H1 (cell line): ENCODE measurements at regions of chr2 and their contacts with region 1.

Region 1: DNA sequence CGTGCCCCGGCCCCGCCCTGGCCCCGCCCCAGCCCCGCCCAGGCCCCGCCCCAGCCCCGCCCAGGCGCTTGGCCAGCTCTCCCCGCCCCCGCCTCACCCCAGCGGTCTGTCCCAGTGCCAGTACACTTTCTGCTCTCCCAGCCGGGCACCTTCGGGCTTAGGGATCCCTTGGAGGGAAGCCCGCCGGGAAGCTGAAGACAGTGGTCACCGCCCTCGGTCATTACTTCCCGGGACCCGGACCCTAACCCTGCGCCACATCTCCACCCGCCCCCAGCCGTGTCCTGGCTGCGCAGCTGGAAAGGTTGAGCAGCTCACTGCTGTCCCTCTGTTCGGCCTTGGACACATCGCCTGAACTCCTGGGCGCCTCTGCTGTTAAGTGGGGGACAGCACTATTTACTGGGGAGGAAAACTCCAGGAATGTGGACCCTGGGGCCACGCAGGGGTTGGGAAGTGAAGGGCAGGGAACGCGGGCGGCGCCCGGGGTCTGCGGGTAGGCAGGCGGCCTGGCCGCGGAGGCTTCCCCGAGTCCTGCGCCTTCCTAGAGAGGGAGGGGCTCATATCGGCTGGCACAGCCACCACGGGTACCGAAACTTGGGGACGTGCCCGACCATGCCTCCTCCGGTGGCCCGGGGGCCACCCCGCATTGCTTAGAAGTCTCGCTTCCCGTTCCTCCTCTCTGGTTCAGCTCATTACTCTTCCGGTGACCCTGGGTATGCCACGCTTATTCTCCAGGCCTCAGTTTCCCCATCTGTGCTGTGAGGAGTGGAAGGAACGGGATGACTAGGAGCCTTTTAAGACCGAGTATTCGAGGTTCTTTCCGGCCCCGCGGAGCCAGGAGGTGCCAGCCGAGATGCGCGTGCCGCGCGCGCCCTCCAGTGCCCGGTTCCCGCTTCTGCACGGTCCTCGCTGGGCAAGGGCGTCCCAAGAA is 121.0 kb downstream of the GYPC start:
- DNase-seq: peak; percentile 36 to 94
- H3K4me3 ChIP-seq: peak overlapping the region; percentile 41 to 81 (median 72)
- H3K27ac ChIP-seq: no peak overlapping the region
- H3K4me1 ChIP-seq: peaks cover 0 to 4% (median 2%) of the 10 kb centered on the region in 4 experiments; a peak in 3 of 7 replicates
- H3K27me3 ChIP-seq: peaks cover 0 to 3% (median 1%) of the 10 kb centered on the region in 4 experiments; a peak in 3 of 7 replicates
- CTCF ChIP-seq: peak; percentile 88 to 95 (median 93)
- EP300 ChIP-seq: no peak
- POLR2A ChIP-seq: no peak
- RAD21 ChIP-seq: peak; percentile 98

Region 2: GRCh38 chr2:126244937-126245336 is 532.0 kb before region 1 on chr2:
- CTCF ChIA-PET with region 1: interaction called, 45 read pairs
- POLR2A ChIA-PET with region 1: no interaction called
- DNase-seq: peak; percentile 51 to 85
- H3K4me3 ChIP-seq: no peak overlapping the region
- H3K27ac ChIP-seq: no peak overlapping the region
- H3K4me1 ChIP-seq: no peaks in the 10 kb centered on the region
- H3K27me3 ChIP-seq: no peaks in the 10 kb centered on the region
- CTCF ChIP-seq: peak; percentile 42 to 97 (median 91)
- EP300 ChIP-seq: no peak
- POLR2A ChIP-seq: no peak
- RAD21 ChIP-seq: peak; percentile 94 to 96

Region 3: DNA sequence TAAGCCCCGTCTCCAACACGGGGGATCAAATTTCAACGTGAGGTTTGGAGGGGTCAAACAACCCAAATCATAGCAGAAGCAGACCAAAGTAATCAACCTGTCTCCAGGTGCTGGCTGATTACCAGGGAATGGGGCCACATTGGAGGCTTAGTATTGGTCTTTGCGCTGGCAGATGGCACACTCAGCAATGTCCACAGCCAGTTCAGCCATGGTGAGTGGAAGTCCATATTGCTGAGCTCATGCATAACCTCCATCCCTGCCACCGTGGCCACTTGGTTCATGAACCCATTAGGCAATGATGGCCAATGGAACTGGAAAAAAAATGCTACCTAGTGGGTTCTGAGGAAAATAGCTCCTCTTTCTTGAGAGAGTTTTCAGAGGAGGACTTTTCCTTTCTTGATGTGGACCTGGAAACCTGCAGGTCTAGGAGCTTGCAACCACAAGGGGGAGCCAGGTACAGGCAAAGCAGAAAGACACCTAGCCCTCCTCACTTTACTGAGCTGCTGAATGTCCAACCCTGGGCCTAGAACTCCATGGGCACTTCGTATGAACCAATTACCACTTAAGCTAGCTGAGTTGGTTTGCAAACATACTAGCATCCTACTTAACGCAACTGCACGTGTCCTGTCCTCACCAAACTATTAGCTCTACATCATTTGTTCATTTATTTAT is 249.0 kb before region 1 on chr2:
- CTCF ChIA-PET with region 1: interaction called, 53 read pairs
- POLR2A ChIA-PET with region 1: no interaction called
- DNase-seq: peak; percentile 39 to 79
- H3K4me3 ChIP-seq: no peak overlapping the region
- H3K27ac ChIP-seq: no peak overlapping the region
- H3K4me1 ChIP-seq: no peaks in the 10 kb centered on the region
- H3K27me3 ChIP-seq: no peaks in the 10 kb centered on the region
- CTCF ChIP-seq: peak; percentile 74 to 88 (median 85)
- EP300 ChIP-seq: no peak
- POLR2A ChIP-seq: no peak
- RAD21 ChIP-seq: peak; percentile 87 to 88

Region 4: GRCh38 chr2:126634273-126634861 is 142.6 kb before region 1 on chr2:
- CTCF ChIA-PET with region 1: interaction called, 13 read pairs
- POLR2A ChIA-PET with region 1: no interaction called
- DNase-seq: peak in 1 of 2 experiments; percentile 53
- H3K4me3 ChIP-seq: no peak overlapping the region
- H3K27ac ChIP-seq: no peak overlapping the region
- H3K4me1 ChIP-seq: no peaks in the 10 kb centered on the region
- H3K27me3 ChIP-seq: no peaks in the 10 kb centered on the region; a peak in 1 of 7 replicates
- CTCF ChIP-seq: peak; percentile 31 to 60 (median 49)
- EP300 ChIP-seq: no peak
- POLR2A ChIP-seq: no peak
- RAD21 ChIP-seq: peak; percentile 37 to 55; a peak in 3 of 4 replicates

Region 5: DNA sequence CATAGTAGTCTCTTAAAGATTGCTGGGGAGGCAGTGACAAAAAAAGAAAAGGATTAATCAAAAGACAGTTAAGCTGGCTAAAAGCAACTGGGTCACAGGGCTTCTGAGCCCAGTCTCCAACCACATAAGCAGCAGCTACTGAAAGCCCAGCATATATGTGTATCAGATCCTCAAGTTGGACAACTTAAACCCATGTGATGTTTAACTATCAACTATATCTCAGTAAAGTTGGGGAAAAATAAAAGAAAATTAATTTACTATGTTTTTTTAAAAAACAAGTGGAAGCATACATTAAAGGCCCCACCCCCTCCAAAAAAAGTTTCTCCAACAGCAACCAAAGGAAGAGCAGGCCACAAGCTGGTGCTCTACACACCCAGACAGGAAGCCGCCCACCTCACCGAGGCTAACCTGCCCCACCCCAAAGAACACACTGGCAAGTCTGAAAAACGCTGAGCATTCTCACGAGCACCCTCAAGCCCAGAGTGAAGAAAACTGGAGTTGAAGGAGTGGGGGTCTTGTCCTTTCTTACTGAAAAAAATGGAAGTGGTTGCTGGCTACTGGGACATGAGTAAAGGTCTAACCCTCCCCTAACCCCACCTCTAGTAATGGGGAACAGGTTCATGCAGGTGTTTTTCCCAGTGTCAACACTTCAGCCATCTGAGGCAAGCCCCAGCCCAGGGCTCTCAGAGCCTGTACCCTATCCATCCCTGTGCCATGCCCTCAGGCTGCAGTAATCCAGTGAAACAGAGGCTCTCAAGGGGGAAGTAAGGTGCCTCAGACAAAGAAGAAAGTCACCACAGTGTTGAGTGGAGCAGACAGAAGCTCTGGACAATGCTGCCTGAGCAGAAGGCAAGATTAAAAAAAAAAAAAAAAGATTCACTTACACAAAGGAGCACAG is 14.7 kb before region 1 on chr2:
- CTCF ChIA-PET with region 1: interaction called, 12 read pairs
- POLR2A ChIA-PET with region 1: no interaction called
- DNase-seq: no peak
- H3K4me3 ChIP-seq: no peak overlapping the region
- H3K27ac ChIP-seq: no peak overlapping the region
- H3K4me1 ChIP-seq: peaks cover 0 to 9% (median 6%) of the 10 kb centered on the region in 4 experiments; a peak in 3 of 7 replicates
- H3K27me3 ChIP-seq: no peaks in the 10 kb centered on the region
- CTCF ChIP-seq: no peak
- EP300 ChIP-seq: no peak
- POLR2A ChIP-seq: no peak
- RAD21 ChIP-seq: no peak

Region 6: DNA sequence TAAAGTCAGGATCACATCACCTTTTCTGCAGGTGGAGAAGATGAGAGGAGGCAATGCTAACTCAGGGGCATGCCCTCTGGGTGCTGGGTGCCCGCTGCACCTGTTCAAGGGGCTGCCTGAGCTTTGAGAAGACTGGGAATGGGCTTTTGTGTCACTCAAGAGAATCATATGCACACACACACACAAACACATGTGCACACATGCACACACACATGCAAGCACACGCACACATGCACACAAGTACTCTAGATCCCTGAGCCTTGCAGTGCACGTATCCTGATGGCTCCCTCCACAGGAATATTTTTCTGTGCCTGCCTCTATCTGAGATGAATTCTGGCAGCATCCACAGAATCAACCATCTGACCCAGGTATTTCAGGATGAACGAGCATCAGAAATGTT is 11.7 kb after region 1 on chr2:
- CTCF ChIA-PET with region 1: interaction called, 18 read pairs
- POLR2A ChIA-PET with region 1: no interaction called
- DNase-seq: no peak
- H3K4me3 ChIP-seq: no peak overlapping the region
- H3K27ac ChIP-seq: no peak overlapping the region
- H3K4me1 ChIP-seq: peaks cover 0 to 2% (median under 1%) of the 10 kb centered on the region in 4 experiments; a peak in 2 of 7 replicates
- H3K27me3 ChIP-seq: no peaks in the 10 kb centered on the region
- CTCF ChIP-seq: no peak
- EP300 ChIP-seq: no peak
- POLR2A ChIP-seq: no peak
- RAD21 ChIP-seq: no peak